CD8-positive, alpha-beta T cell (primary cell): ENCODE measurements at regions of chr13 and their contacts with region 1.

Region 1: DNA sequence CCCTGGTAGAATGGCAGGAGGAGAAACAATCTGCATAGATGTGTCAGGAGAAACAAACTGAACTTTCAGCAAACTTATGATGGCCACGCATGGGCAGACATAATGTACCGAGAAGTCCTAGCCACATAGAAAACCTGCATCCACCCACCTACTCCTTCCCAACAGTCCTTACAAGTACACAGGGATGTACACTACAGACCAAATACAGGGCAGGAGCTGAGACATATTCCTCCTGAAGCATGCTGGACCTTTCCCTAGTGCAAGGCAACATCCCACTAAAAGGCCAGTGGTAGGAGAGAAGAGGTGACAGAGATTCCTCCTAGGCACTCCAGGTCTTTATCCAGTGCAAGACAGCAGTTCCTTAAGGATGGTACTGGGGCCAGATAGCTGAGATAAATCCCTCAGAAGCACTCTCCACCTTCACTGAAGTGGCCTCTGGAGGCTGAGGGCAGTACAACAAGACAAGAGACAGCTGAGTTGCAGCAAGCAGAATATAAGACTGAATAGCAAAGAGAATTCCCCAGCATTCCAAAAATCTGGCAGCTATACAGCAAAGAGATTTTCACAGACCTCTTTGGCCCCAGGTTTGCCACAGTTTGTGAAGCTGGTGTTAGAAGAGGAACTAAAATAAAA is 18.3 kb downstream of the VWA8 start:
- DNase-seq: no peak
- ATAC-seq: no peak
- H3K4me3 ChIP-seq: no peak overlapping the region
- H3K4me3 Mint-ChIP-seq: no peak overlapping the region
- H3K27ac ChIP-seq: no peak overlapping the region
- H3K27ac Mint-ChIP-seq: no peak overlapping the region
- H3K4me1 ChIP-seq: no peaks in the 10 kb centered on the region
- H3K4me1 Mint-ChIP-seq: peaks cover 32% of the 10 kb centered on the region
- H3K27me3 ChIP-seq: no peaks in the 10 kb centered on the region
- H3K27me3 Mint-ChIP-seq: no peaks in the 10 kb centered on the region
- CTCF ChIP-seq: no peak

Region 2: GRCh38 chr13:41040606-41041319 is 901.8 kb before region 1 on chr13:
- CTCF ChIA-PET with region 1: no interaction called
- POLR2A ChIA-PET with region 1: no interaction called
- intact Hi-C with region 1: no loop called
- DNase-seq: no peak
- ATAC-seq: no peak
- H3K4me3 ChIP-seq: no peak overlapping the region
- H3K4me3 Mint-ChIP-seq: no peak overlapping the region
- H3K27ac ChIP-seq: no peak overlapping the region
- H3K27ac Mint-ChIP-seq: peak overlapping the region; percentile 38
- H3K4me1 ChIP-seq: no peaks in the 10 kb centered on the region
- H3K4me1 Mint-ChIP-seq: peaks cover 20% of the 10 kb centered on the region
- H3K27me3 ChIP-seq: no peaks in the 10 kb centered on the region
- H3K27me3 Mint-ChIP-seq: no peaks in the 10 kb centered on the region
- CTCF ChIP-seq: no peak

Region 3: DNA sequence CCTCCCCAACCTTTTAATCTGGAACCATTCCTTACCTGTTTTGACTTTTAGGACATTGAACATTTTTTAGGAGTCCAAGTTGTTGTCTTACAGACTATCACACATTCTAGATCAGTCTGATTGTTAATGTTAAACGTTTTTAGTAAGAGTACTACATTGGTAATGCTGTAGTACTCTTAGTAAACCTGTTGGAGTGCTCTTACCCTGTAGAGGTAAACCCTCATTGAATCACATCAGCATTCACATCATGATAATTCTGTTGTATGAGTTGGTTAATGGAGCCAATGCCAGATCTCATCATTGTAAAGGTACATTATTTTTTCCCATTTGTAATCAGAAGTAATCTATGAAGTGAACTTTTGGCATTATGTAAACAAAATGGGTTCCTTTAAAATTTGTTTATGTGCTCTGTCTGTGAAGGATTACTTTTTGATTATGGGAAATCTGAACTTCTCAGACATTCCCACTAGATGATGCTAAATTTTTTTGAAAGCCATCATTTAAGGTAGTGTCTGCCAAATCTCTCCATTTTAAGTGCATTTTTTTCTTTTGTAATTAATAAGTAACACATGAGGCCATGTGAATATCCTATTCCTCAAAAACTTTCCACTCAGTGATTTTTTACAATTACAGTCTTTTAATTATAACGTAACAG is 36.9 kb before region 1 on chr13:
- CTCF ChIA-PET with region 1: no interaction called
- POLR2A ChIA-PET with region 1: no interaction called
- intact Hi-C with region 1: no loop called
- DNase-seq: peak in 2 of 9 experiments; percentile 46 to 61
- ATAC-seq: peak; percentile 98
- H3K4me3 ChIP-seq: no peak overlapping the region
- H3K4me3 Mint-ChIP-seq: no peak overlapping the region
- H3K27ac ChIP-seq: no peak overlapping the region
- H3K27ac Mint-ChIP-seq: no peak overlapping the region
- H3K4me1 ChIP-seq: no peaks in the 10 kb centered on the region
- H3K4me1 Mint-ChIP-seq: peaks cover 5% of the 10 kb centered on the region
- H3K27me3 ChIP-seq: no peaks in the 10 kb centered on the region
- H3K27me3 Mint-ChIP-seq: no peaks in the 10 kb centered on the region
- CTCF ChIP-seq: peak; percentile 76

Region 4: DNA sequence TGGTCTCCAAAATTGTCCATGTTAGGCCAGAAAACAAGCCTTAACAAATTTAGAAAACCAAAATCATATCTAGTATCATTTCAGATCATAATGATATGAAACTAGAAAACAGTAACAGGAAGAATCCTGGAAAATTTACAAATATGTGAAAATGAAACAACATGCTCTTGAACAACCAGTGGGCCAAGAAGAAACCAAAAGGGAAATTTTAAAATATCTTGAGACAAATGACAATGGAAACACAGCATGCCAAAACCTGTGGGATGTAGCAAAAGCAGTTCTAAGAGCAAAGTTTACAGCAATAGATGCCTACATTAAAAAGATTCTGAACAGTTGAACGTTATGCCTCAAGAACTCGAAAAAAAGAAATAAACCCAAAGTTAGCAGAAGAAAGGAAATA is 14.3 kb before region 1 on chr13:
- CTCF ChIA-PET with region 1: no interaction called
- POLR2A ChIA-PET with region 1: no interaction called
- intact Hi-C with region 1: loop called in 1 of 2 experiments (anchors 2 kb)
- DNase-seq: no peak
- ATAC-seq: no peak
- H3K4me3 ChIP-seq: no peak overlapping the region
- H3K4me3 Mint-ChIP-seq: peak overlapping the region; percentile 72
- H3K27ac ChIP-seq: no peak overlapping the region
- H3K27ac Mint-ChIP-seq: peak overlapping the region; percentile 29
- H3K4me1 ChIP-seq: peaks cover 9% of the 10 kb centered on the region
- H3K4me1 Mint-ChIP-seq: peaks cover 40% of the 10 kb centered on the region
- H3K27me3 ChIP-seq: no peaks in the 10 kb centered on the region
- H3K27me3 Mint-ChIP-seq: no peaks in the 10 kb centered on the region
- CTCF ChIP-seq: no peak

Region 5: GRCh38 chr13:42086582-42086981 is 144.0 kb after region 1 on chr13:
- CTCF ChIA-PET with region 1: no interaction called
- POLR2A ChIA-PET with region 1: no interaction called
- intact Hi-C with region 1: no loop called
- DNase-seq: no peak
- ATAC-seq: no peak
- H3K4me3 ChIP-seq: no peak overlapping the region
- H3K4me3 Mint-ChIP-seq: no peak overlapping the region
- H3K27ac ChIP-seq: no peak overlapping the region
- H3K27ac Mint-ChIP-seq: no peak overlapping the region
- H3K4me1 ChIP-seq: no peaks in the 10 kb centered on the region
- H3K4me1 Mint-ChIP-seq: peaks cover 3% of the 10 kb centered on the region
- H3K27me3 ChIP-seq: no peaks in the 10 kb centered on the region
- H3K27me3 Mint-ChIP-seq: no peaks in the 10 kb centered on the region
- CTCF ChIP-seq: no peak